ENCODE measurements at regions of chr7 and their contacts with region 1.

Region 1: GRCh38 chr7:135801045-135801693 is 52.6 kb upstream of the FAM180A start:
- DNase-seq: peak; percentile 15 to 66 (median 22)
- ATAC-seq: peak; percentile 71
- H3K4me3 ChIP-seq: no peak overlapping the region
- H3K27ac ChIP-seq: no peak overlapping the region
- H3K4me1 ChIP-seq: peaks cover 14% of the 10 kb centered on the region
- H3K27me3 ChIP-seq: no peaks in the 10 kb centered on the region
- CTCF ChIP-seq: peak; percentile 65 to 91 (median 84)
- POLR2A ChIP-seq: no peak

Region 2: GRCh38 chr7:135678612-135679575 is 122.3 kb before region 1 on chr7:
- intact Hi-C with region 1: no loop called
- DNase-seq: peak; percentile 63 to 89 (median 79)
- ATAC-seq: peak; percentile 88
- H3K4me3 ChIP-seq: no peak overlapping the region
- H3K27ac ChIP-seq: peak overlapping the region; percentile 39 to 62 (median 46)
- H3K4me1 ChIP-seq: peaks cover 15% of the 10 kb centered on the region
- H3K27me3 ChIP-seq: no peaks in the 10 kb centered on the region
- CTCF ChIP-seq: no peak
- POLR2A ChIP-seq: no peak

Region 3: GRCh38 chr7:135843214-135843613 is 42.0 kb after region 1 on chr7:
- intact Hi-C with region 1: no loop called
- DNase-seq: no peak
- ATAC-seq: no peak
- H3K4me3 ChIP-seq: no peak overlapping the region
- H3K27ac ChIP-seq: no peak overlapping the region
- H3K4me1 ChIP-seq: no peaks in the 10 kb centered on the region
- H3K27me3 ChIP-seq: no peaks in the 10 kb centered on the region
- CTCF ChIP-seq: no peak
- POLR2A ChIP-seq: no peak

Region 4: DNA sequence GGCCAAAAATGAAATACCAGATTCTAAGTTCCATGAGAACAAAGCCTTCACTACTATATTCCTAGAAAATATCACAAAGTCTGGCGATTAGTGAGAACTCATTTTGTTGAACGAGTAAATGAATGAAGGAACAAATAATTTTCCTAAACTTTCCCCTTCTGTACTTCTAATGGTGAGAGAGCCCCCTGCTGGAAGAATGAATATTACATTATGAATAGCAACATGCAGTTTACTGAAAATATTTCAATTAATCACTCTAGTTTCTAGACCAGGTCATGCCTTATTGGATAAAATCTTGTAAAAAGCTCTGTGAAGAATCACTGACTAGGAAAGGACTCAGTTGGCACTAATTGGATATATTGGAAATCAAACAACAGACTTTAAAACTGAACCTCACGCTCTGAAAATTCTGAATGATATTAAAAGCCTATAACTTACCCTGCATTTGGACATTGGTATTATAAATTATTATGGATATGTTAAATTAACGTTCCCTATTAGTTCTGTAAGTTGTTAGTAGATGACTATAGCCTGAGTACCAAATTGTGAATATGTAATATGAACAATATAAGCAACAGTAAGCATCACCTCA is 208.4 kb after region 1 on chr7:
- intact Hi-C with region 1: loop called (anchors 5 kb)
- DNase-seq: no peak
- ATAC-seq: no peak
- H3K4me3 ChIP-seq: no peak overlapping the region
- H3K27ac ChIP-seq: no peak overlapping the region
- H3K4me1 ChIP-seq: no peaks in the 10 kb centered on the region
- H3K27me3 ChIP-seq: no peaks in the 10 kb centered on the region
- CTCF ChIP-seq: peak; percentile 43 to 78 (median 72)
- POLR2A ChIP-seq: no peak

Region 5: GRCh38 chr7:136133551-136133950 is 332.4 kb after region 1 on chr7:
- intact Hi-C with region 1: no loop called
- DNase-seq: no peak
- ATAC-seq: no peak
- H3K4me3 ChIP-seq: no peak overlapping the region
- H3K27ac ChIP-seq: no peak overlapping the region
- H3K4me1 ChIP-seq: no peaks in the 10 kb centered on the region
- H3K27me3 ChIP-seq: no peaks in the 10 kb centered on the region
- CTCF ChIP-seq: no peak
- POLR2A ChIP-seq: no peak